ENCODE measurements at regions of chr18 and their contacts with region 1.

Region 1: DNA sequence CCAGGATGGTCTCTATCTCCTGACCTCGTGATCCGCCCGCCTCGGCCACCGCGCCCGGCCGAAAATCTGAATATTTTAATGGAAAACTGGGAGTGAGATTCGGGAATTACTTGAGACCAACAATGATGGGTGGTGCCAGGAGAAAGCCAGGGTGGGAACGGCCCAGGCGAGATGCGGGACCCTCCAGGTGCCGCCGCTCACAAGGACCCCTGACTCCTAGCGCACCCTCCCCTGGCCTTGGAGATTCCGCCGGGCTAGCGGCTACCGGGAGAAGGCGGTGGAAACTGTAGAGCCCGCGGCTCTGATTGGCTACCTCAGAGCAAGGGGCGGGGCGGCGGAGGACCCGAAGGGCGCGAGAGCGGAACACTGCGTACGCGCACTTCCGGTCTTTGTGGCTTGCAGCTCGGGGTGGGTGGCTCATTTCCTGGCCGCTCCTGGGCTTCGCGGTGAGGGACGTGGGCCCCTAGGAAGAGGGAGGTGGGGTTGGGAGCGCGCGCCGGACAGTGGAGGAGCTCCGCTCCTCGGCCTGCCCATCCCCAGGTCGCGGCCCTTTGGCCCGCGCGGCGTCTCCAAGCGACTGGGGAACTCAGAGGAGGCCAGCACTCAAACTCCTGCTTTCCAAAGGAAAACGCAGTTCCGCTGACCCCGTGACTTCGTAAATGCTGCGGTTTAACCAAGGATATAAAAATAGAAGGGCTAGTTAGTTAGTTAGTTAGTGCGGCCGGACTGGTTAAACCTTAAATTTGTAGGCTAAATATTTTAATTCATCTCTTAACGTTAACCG is at the start of gene ZNF397:
- DNase-seq: peak; percentile 82 to 94
- ATAC-seq: peak; percentile 100
- H3K4me3 ChIP-seq: peak within 1 kb of the TSS; percentile 67
- H3K27ac ChIP-seq: peak within 1 kb of the TSS; percentile 93 to 94
- H3K4me1 ChIP-seq: no peaks in the 10 kb centered on the region
- CTCF ChIP-seq: no peak
- EP300 ChIP-seq: no peak
- POLR2A ChIP-seq: peak; percentile 53
- RAD21 ChIP-seq: no peak
- polyA plus RNA-seq, gene ZNF397: 8.0 and 11.2 TPM in 2 replicates

Region 2: GRCh38 chr18:35290073-35290735 is 49.3 kb after region 1 on chr18 and contains the start of gene ZSCAN30:
- CTCF ChIA-PET with region 1: no interaction called
- POLR2A ChIA-PET with region 1: interaction called, 18 read pairs
- DNase-seq: peak; percentile 69 to 95
- ATAC-seq: peak; percentile 97 to 99
- H3K4me3 ChIP-seq: peak within 1 kb of the TSS; percentile 61
- H3K27ac ChIP-seq: peak within 1 kb of the TSS; percentile 88 to 90
- H3K4me1 ChIP-seq: 0 out of 3 replicates have a peak, but pooled peaks cover 5% of the 10 kb centered on the region
- CTCF ChIP-seq: no peak
- EP300 ChIP-seq: no peak
- POLR2A ChIP-seq: peak; percentile 72
- RAD21 ChIP-seq: no peak
- polyA plus RNA-seq, gene ZSCAN30: 3.0 and 3.4 TPM in 2 replicates